ENCODE measurements at regions of chr15 and their contacts with region 1.

Region 1: GRCh38 chr15:78241007-78241406 is 6.6 kb upstream of the ACSBG1 start:
- DNase-seq: peak; percentile 64
- ATAC-seq: peak; percentile 99
- H3K4me3 ChIP-seq: no peak overlapping the region
- H3K27ac ChIP-seq: no peak overlapping the region
- H3K4me1 ChIP-seq: no peaks in the 10 kb centered on the region
- H3K27me3 ChIP-seq: no peaks in the 10 kb centered on the region
- CTCF ChIP-seq: peak; percentile 95

Region 2: DNA sequence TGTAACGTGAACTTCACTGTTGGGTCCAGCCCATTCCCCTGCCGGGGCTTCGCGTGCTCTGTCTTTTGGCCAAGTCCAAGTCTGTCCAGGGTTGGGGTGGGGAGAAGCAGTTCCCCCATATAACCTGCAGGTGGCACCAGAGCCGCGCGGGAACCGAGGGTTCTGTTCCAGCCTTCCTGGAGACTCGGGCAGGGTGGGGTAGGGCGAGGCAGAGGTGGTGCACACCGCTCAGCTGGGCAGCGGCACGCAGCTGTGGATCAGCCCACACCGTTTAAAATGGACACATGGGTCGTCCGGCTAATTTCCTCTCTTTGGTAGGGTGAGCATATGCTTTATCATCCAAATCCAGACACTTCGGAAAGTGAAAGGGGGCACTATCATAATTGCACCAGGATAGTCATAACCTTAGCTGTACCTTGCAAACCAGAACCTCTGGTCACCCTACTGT is 281.6 kb before region 1 on chr15:
- CTCF ChIA-PET with region 1: interaction called, 6 read pairs
- POLR2A ChIA-PET with region 1: no interaction called
- in situ Hi-C with region 1: no loop called
- intact Hi-C with region 1: loop called (anchors 2 kb)
- DNase-seq: no peak
- ATAC-seq: peak; percentile 100
- H3K4me3 ChIP-seq: peak overlapping the region; percentile 23 to 43
- H3K27ac ChIP-seq: no peak overlapping the region; the same call in 1 of the 2 replicates
- H3K4me1 ChIP-seq: peaks cover 3% of the 10 kb centered on the region; the same call in 1 of the 2 replicates
- H3K27me3 ChIP-seq: no peaks in the 10 kb centered on the region; the same call in 1 of the 2 replicates
- CTCF ChIP-seq: peak; percentile 97

Region 3: DNA sequence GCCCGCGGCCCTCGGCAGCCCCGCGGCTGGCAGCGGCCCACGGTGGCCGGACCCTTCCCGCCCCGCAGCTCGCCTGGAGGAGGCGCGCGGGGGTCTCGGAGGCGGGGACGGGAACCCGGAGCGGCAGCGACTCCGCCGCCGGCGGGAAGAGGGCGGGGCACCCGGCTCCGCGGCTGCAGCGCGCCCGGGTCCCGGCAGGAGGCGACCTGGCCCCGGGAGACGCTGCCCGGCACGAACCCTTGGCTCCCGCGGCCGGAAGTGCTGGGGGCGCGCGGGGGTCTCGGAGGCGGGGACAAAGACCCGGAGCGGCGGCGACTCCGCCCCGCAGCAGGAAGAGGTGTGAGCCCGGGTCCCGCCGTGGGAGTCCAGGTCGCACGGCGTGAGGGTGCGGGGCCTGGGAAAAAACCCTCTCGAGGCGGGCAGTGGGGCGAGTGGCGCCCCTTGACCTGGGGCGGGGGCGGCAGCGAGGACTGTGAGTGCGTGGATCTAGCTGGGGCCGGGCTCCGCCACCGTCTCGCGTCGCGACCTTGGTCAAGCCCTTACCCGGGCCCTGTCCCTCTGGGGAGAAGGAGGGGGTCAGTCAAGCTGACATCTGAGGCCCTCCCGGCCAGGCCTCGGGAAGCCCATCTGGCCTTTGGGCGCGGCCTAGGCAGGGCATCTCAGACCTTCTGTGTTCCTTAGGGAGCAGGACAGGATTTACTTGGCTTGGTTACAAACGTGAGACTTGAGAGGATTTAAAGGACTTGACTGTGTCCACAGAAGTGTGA is 109.5 kb before region 1 on chr15 and contains the start of gene CIB2:
- CTCF ChIA-PET with region 1: interaction called, 4 read pairs
- POLR2A ChIA-PET with region 1: interaction called, 6 read pairs
- in situ Hi-C with region 1: no loop called
- intact Hi-C with region 1: loop called (anchors 5 kb)
- DNase-seq: no peak
- ATAC-seq: peak; percentile 93
- H3K4me3 ChIP-seq: peak within 1 kb of the TSS; percentile 68 to 78
- H3K27ac ChIP-seq: peak within 1 kb of the TSS; percentile 90
- H3K4me1 ChIP-seq: peaks cover 3% of the 10 kb centered on the region; the same call in 1 of the 2 replicates
- H3K27me3 ChIP-seq: no peaks in the 10 kb centered on the region
- CTCF ChIP-seq: peak; percentile 96
- total RNA-seq, gene CIB2: 37.3 TPM

Region 4: DNA sequence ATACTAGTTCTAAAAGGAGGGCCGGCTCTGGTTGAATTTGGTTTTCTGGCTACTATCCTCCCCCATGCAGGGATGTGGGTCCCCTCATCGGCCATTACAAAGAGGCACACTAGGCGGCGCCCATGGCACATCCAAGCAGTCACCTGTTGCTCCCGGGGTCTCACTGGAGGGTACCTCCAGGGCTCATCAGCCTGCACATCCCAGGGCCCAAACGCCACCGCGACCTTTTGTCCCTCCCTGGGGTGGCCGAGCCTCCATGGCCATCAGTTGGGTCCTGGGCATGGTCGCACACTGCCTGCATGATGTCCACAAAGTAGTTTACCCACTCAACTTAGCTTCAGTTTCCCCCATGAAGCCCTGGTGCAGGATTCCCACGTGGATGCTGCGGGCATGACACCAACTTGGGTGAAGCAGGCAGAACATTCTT is 63.5 kb before region 1 on chr15:
- CTCF ChIA-PET with region 1: interaction called, 4 read pairs
- POLR2A ChIA-PET with region 1: interaction called, 6 read pairs
- in situ Hi-C with region 1: no loop called
- intact Hi-C with region 1: loop called (anchors 1 kb)
- DNase-seq: peak; percentile 25
- ATAC-seq: peak; percentile 79
- H3K4me3 ChIP-seq: no peak overlapping the region
- H3K27ac ChIP-seq: no peak overlapping the region
- H3K4me1 ChIP-seq: no peaks in the 10 kb centered on the region
- H3K27me3 ChIP-seq: no peaks in the 10 kb centered on the region
- CTCF ChIP-seq: peak; percentile 92

Region 5: DNA sequence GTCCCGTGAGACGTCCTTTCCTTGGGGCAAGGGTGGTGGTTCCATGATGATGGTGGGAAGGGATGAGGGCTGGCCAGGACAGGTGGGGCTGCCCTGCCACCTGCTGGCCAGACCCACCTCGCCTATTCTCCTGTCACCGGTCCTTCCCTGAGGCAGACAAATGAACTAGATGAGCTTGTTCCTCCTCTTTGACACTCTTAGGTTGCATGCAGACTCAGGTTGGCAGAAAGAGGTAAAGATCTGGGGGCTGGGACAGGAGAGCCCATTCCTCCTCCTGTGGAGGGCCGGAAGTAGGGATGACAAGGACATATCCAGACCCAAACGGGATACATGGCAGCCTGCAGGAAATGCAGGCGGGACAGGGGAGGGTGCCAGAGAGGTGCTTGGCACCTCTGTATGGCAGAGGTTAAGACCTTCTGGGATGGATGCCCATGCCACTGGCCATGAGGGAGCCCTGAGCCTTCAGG is 45.2 kb before region 1 on chr15:
- CTCF ChIA-PET with region 1: interaction called, 19 read pairs
- POLR2A ChIA-PET with region 1: no interaction called
- in situ Hi-C with region 1: no loop called
- intact Hi-C with region 1: no loop called
- DNase-seq: no peak
- ATAC-seq: peak; percentile 95
- H3K4me3 ChIP-seq: no peak overlapping the region
- H3K27ac ChIP-seq: no peak overlapping the region
- H3K4me1 ChIP-seq: no peaks in the 10 kb centered on the region
- H3K27me3 ChIP-seq: no peaks in the 10 kb centered on the region
- CTCF ChIP-seq: peak; percentile 92

Region 6: DNA sequence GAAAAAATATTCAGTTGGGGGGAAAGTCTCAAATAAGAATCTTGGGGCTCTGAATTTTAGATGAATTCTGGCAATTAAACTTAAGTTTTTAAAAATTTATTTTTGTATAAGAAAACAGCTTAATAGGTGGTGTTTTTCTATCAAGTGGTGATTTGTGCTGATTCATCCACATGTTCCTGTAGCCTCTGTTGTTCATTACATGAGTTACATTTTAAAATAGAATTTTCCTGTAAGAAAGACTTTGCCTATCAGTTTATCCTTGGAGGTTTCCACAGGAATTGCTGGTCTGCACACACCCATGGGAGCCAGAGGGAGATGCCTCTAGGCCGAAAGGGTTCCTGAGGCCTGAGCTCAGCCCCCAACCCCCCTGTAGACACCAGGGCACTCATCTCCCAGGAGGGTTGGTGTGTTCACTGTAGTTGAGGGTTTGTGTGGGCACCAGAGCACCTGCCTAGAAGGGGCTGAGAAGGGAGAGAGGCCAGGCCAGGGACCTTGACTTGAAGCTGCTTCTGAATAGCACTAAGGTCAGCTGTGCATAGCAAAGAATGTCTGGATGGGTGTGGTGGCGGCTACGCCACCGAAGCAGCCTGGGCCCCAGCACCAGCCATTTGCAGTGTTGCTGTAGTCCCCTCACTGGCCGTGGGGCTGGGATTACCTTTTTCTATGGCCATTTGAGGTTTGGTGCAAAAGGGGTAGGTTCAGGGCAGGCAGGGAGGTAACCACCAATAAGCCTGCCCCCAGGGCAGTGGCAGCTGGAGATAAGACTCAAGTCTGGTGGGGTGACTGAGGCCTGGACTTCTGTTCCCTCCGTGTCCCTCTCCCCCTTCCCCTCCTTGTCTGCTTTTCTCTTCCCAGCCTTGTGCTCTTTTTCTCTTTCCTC is 35.3 kb after region 1 on chr15:
- CTCF ChIA-PET with region 1: no interaction called
- POLR2A ChIA-PET with region 1: no interaction called
- in situ Hi-C with region 1: no loop called
- intact Hi-C with region 1: no loop called
- DNase-seq: no peak
- ATAC-seq: peak; percentile 46; the same call in 1 of the 2 replicates
- H3K4me3 ChIP-seq: no peak overlapping the region
- H3K27ac ChIP-seq: no peak overlapping the region
- H3K4me1 ChIP-seq: no peaks in the 10 kb centered on the region
- H3K27me3 ChIP-seq: no peaks in the 10 kb centered on the region
- CTCF ChIP-seq: no peak

Measured in Panc1 (cell line).